Activated naive CD4-positive, alpha-beta T cell treated with anti-CD3 and anti-CD28 coated beads, Interleukin-2, amount 10 ng/mL, durations not matched to agents 7 days and 5 days (primary cell): ENCODE measurements at regions of chr1 and their contacts with region 1.

Region 1: DNA sequence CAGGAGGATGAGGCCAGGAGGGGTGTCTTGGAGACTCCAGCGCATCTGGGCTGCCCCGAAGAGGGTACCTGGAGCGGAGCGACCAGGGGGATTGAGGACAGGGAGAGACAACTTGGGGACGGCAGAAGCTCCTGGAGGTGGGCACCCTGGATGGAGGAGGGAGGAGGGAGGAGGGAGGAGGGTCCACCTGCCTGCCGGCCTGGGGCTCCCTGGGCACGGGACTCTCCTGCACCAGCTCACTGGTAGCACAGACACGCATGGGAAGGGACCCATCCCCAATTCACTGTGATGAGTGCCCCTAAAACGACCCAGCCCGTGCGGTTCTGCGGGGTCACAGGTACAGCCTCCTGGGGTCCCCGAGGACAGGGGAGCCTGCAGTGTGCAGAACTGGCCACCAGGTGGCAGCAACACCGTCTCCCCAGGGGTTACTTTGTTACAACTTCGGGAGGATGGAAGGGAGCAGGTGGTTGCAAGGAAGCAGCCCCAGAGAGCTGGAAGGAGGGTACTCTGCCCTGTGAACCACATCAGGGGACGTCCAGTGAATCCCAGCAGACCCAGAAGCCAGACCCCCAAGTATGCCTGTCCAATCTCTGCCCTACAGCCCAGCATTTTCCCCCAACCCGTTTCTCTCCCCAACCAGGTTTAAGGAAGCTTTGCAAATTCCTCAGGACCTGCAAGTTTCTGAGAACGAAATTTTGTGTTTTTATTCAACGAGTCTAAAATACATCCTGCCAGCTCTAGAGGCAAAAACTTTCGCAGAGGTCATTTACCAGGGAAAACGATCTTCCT is 482.4 kb downstream of the NPHP4 start:
- DNase-seq: peak; percentile 79
- H3K4me3 Mint-ChIP-seq: no peak overlapping the region
- H3K27ac Mint-ChIP-seq: no peak overlapping the region
- H3K4me1 Mint-ChIP-seq: no peaks in the 10 kb centered on the region
- H3K27me3 Mint-ChIP-seq: peaks cover 34% of the 10 kb centered on the region

Region 2: DNA sequence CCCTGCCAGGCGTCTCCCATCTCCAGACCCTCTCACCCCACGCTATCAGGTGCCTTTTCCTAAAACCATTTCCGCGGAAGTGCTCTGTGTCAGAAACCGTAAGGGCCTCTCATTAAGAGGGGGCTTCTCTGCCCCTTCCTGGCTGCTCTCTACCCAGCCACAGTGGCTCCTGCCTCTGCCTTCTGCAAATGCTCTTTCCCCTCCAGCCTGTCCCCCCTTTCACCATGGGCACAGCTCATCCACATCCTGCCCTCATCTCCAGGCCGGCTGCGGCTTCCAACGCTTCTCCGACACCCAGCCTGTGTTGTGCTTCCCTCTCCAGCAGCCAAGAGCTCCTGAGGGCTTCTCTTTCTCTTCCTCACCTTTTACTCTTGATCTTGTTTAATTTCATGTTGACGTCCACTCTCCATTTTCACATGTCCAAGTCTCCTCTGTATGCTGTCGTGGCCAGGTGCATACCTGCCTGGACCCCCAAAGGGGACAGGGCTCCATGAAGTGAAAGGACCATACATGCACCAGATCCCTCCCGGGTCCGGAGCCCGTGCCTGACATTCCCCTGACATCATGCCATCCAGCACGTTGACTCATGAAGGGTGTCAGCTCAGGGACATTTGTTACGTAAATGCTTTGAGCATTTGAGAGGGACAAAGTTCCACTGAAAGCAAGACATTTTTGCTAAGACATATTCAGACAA is 548.9 kb before region 1 on chr1:
- CTCF ChIA-PET with region 1: no interaction called
- DNase-seq: no peak
- H3K4me3 Mint-ChIP-seq: no peak overlapping the region
- H3K27ac Mint-ChIP-seq: peak overlapping the region; percentile 4
- H3K4me1 Mint-ChIP-seq: no peaks in the 10 kb centered on the region
- H3K27me3 Mint-ChIP-seq: peaks cover 5% of the 10 kb centered on the region

Region 3: DNA sequence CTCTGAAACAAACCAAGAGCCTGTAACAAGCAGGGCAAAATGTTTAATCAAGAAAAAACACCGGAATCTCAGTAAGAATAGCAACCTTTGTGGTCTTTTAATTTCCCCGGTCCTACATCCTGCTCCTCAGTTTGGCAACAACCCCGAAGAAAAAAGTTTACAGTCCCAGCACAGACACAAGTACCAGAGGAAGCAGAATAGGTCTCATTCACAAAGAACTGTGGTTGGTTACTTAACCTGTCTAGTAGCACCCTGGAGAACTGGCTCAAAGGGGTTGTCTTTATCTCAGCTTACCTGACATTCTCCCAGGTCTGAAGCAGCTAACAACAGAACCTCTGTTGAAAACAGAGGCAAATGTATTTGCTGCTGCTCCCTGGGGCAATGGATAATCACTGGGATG is 456.1 kb before region 1 on chr1:
- CTCF ChIA-PET with region 1: no interaction called
- DNase-seq: no peak
- H3K4me3 Mint-ChIP-seq: no peak overlapping the region
- H3K27ac Mint-ChIP-seq: no peak overlapping the region
- H3K4me1 Mint-ChIP-seq: no peaks in the 10 kb centered on the region
- H3K27me3 Mint-ChIP-seq: peaks cover 4% of the 10 kb centered on the region

Region 4: GRCh38 chr1:5456090-5456811 is 53.6 kb before region 1 on chr1:
- CTCF ChIA-PET with region 1: no interaction called
- DNase-seq: no peak
- H3K4me3 Mint-ChIP-seq: no peak overlapping the region
- H3K27ac Mint-ChIP-seq: no peak overlapping the region
- H3K4me1 Mint-ChIP-seq: no peaks in the 10 kb centered on the region
- H3K27me3 Mint-ChIP-seq: peaks cover 25% of the 10 kb centered on the region

Region 5: DNA sequence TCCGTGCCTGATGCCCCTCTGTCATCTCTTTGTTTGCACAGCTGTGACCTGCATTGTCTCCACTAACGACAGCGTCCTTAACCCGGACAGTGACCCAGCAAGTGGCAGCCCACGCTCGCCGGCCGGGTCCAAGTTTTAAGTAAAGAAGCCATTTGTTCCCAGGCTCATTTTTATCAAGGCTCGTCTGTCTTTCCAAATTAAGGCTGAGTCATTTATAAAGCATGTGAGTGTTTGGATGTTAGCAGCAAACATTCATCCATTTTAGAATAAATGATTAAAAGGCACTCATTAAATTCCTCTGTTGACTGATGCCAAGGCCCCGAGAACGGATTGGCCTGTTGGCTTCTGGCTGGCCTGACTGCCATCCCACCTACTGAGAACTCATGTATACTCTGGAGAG is 32.1 kb before region 1 on chr1:
- CTCF ChIA-PET with region 1: no interaction called
- DNase-seq: no peak
- H3K4me3 Mint-ChIP-seq: no peak overlapping the region
- H3K27ac Mint-ChIP-seq: no peak overlapping the region
- H3K4me1 Mint-ChIP-seq: peaks cover 5% of the 10 kb centered on the region
- H3K27me3 Mint-ChIP-seq: peaks cover 15% of the 10 kb centered on the region

Region 6: DNA sequence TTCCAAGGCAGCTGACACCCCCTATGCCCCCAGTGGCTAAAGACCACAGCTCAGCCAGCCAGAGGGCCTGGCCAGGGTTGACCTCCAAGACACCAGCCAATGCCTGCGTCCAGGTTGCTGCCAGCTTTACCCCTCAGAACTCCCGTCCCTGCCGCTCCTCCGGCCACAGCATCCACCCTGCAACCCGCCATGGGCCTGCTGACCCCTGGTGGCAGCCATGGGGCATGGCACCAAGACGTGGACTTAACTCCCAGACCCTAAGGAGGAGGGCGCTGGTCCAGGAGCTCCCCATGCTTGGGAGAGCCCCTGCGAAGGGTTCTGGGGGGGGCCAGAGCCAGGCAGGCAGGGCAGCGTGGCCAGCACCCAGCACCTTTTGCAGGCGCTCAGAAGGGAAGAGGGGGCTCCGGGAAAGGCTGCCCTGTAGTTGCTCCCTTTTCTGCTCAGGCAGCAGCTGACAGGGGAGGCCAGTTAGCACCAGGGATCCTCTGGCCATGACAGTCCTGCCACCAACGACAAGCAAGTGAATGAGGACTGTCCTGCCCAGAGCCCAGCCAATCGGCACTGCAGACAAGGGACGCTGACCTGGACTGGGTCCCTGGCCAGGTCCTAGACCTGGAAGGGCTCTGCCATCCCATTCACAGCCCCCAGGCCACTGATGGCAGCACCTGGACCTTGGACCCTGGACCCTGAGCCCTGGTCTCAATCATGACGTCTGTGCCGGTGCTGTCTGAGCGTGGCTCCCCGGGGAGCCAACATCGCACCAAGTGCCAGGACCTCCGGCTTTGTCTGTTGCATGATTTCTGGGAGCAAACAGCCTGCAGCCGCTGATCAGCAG is 236.1 kb after region 1 on chr1:
- CTCF ChIA-PET with region 1: interaction called, 13 read pairs
- DNase-seq: peak; percentile 65
- H3K4me3 Mint-ChIP-seq: no peak overlapping the region
- H3K27ac Mint-ChIP-seq: no peak overlapping the region
- H3K4me1 Mint-ChIP-seq: no peaks in the 10 kb centered on the region
- H3K27me3 Mint-ChIP-seq: peaks cover 11% of the 10 kb centered on the region